B cell (primary cell): ENCODE measurements at regions of chr11 and their contacts with region 1.

Region 1: DNA sequence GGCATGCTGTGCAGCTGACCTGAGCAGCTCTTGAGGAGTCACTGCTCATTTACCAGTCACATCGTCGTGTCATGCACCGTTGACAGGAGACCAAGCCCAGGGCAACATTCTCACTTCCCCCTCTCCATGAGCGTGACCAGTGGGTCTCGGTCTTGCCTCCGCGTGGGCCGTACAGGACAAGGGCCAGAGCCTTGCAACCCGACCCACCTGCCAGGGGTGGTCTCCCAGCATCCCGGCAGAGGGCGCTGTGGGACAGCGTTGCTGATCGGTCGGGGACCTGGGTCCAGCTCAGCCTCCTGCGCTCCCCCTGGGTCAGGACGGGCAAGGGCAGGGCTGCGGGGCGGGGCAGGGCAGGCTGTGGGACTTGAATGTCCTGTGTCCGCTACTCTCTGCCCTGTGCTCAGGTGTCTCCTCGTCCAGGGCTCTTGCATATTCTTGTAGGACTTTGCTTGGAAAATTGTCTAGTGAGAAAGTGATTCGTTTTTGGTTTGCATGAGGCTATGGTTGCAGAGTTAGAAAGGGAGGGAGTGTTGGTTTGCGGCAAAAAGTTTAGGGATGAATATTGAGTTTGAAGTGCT is 16.2 kb downstream of the EIF4G2 start:
- DNase-seq: peak; percentile 86
- ATAC-seq: peak; percentile 97
- H3K4me3 ChIP-seq: peak overlapping the region in 2 of 5 experiments; percentile 17 to 32
- H3K4me3 Mint-ChIP-seq: peak overlapping the region; percentile 17
- H3K27ac ChIP-seq: no peak overlapping the region
- H3K27ac Mint-ChIP-seq: no peak overlapping the region
- H3K4me1 ChIP-seq: peaks cover 13 to 20% of the 10 kb centered on the region in 2 donors
- H3K4me1 Mint-ChIP-seq: peaks cover 21% of the 10 kb centered on the region
- H3K27me3 ChIP-seq: no peaks in the 10 kb centered on the region
- H3K27me3 Mint-ChIP-seq: no peaks in the 10 kb centered on the region
- CTCF ChIP-seq: peak; percentile 90

Region 2: DNA sequence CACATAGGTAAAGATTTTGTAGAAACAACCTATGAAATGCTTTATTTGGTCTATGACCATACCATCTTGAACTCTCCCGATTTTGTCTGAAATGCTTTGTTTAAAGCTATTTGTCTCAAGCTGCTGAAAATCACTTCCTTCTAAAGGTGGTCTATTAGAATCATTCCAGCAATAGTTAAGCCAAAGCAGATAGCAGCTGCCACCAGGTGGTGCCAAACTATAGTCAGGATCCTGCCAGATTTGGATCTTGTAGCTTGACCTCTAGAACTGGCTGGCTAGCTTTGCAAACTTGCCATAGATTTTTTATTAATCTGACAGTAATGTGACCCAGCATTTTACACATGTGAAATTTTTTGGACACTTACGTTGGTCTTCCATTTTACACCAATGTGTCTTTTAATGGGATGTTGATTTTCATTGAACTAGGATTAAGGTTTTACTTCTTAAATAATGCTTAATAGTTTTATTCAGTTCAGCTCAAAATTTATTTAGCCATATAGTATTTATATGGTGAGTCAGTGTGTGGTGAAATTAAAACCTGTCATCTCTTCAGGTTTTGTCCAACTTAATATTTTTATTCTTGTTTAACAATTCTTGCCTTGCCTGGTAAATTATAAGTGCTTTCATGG is 21.7 kb before region 1 on chr11:
- CTCF ChIA-PET with region 1: interaction called, 19 read pairs
- POLR2A ChIA-PET with region 1: no interaction called
- intact Hi-C with region 1: no loop called
- DNase-seq: peak; percentile 39
- ATAC-seq: no peak
- H3K4me3 ChIP-seq: no peak overlapping the region
- H3K4me3 Mint-ChIP-seq: no peak overlapping the region
- H3K27ac ChIP-seq: no peak overlapping the region
- H3K27ac Mint-ChIP-seq: no peak overlapping the region
- H3K4me1 ChIP-seq: no peaks in the 10 kb centered on the region
- H3K4me1 Mint-ChIP-seq: no peaks in the 10 kb centered on the region
- H3K27me3 ChIP-seq: no peaks in the 10 kb centered on the region
- H3K27me3 Mint-ChIP-seq: no peaks in the 10 kb centered on the region
- CTCF ChIP-seq: peak; percentile 66

Region 3: GRCh38 chr11:10866893-10867331 is 74.4 kb after region 1 on chr11:
- CTCF ChIA-PET with region 1: no interaction called
- POLR2A ChIA-PET with region 1: no interaction called
- intact Hi-C with region 1: no loop called
- DNase-seq: no peak
- ATAC-seq: no peak
- H3K4me3 ChIP-seq: no peak overlapping the region
- H3K4me3 Mint-ChIP-seq: no peak overlapping the region
- H3K27ac ChIP-seq: no peak overlapping the region
- H3K27ac Mint-ChIP-seq: no peak overlapping the region
- H3K4me1 ChIP-seq: peaks cover 8 to 11% of the 10 kb centered on the region in 2 donors
- H3K4me1 Mint-ChIP-seq: peaks cover 16% of the 10 kb centered on the region
- H3K27me3 ChIP-seq: no peaks in the 10 kb centered on the region
- H3K27me3 Mint-ChIP-seq: no peaks in the 10 kb centered on the region
- CTCF ChIP-seq: no peak

Region 4: GRCh38 chr11:10906513-10906912 is 114.0 kb after region 1 on chr11:
- CTCF ChIA-PET with region 1: interaction called, 19 read pairs
- POLR2A ChIA-PET with region 1: no interaction called
- intact Hi-C with region 1: no loop called
- DNase-seq: no peak
- ATAC-seq: no peak
- H3K4me3 ChIP-seq: no peak overlapping the region
- H3K4me3 Mint-ChIP-seq: no peak overlapping the region
- H3K27ac ChIP-seq: no peak overlapping the region
- H3K27ac Mint-ChIP-seq: no peak overlapping the region
- H3K4me1 ChIP-seq: no peaks in the 10 kb centered on the region
- H3K4me1 Mint-ChIP-seq: no peaks in the 10 kb centered on the region
- H3K27me3 ChIP-seq: peaks cover 0 to 10% (median 1%) of the 10 kb centered on the region in 4 experiments
- H3K27me3 Mint-ChIP-seq: peaks cover 20% of the 10 kb centered on the region
- CTCF ChIP-seq: no peak